Heart right ventricle (tissue), 16 donors: ENCODE measurements at regions of chr9 and their contacts with region 1.

Region 1: GRCh38 chr9:24359046-24359445 is 186.7 kb downstream of the IZUMO3 start:
- DNase-seq: no peak
- ATAC-seq: no peak
- H3K4me3 ChIP-seq: no peak overlapping the region
- H3K27ac ChIP-seq: no peak overlapping the region
- H3K4me1 ChIP-seq: no peaks in the 10 kb centered on the region
- H3K27me3 ChIP-seq: no peaks in the 10 kb centered on the region
- CTCF ChIP-seq: no peak

Region 2: GRCh38 chr9:24308010-24308409 is 51.0 kb before region 1 on chr9:
- intact Hi-C with region 1: loop called in 1 of 10 experiments (anchors 10 kb)
- DNase-seq: no peak
- ATAC-seq: no peak
- H3K4me3 ChIP-seq: no peak overlapping the region
- H3K27ac ChIP-seq: no peak overlapping the region
- H3K4me1 ChIP-seq: no peaks in the 10 kb centered on the region
- H3K27me3 ChIP-seq: no peaks in the 10 kb centered on the region
- CTCF ChIP-seq: no peak

Region 3: DNA sequence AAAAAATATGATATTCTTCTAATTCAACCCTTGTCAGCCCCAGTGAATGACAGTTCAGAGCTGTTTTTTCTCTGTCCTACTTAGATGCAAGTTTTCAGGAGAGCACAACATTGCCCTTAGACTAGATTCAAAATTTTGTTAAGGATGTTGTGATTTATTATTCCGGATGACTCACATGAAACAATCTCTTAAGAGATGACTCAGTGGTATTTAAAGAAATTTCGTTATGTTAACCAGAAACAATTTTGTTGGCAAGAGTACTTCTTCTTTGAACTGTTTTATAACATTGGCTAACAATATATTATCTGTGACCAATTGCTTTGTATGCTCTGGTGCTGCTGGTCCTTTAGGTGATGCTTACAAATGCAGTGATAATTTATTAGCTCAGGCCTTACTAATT is 54.6 kb after region 1 on chr9:
- intact Hi-C with region 1: loop called in 1 of 10 experiments (anchors 5 kb)
- DNase-seq: no peak
- ATAC-seq: no peak
- H3K4me3 ChIP-seq: no peak overlapping the region
- H3K27ac ChIP-seq: no peak overlapping the region
- H3K4me1 ChIP-seq: no peaks in the 10 kb centered on the region
- H3K27me3 ChIP-seq: no peaks in the 10 kb centered on the region
- CTCF ChIP-seq: no peak

Region 4: DNA sequence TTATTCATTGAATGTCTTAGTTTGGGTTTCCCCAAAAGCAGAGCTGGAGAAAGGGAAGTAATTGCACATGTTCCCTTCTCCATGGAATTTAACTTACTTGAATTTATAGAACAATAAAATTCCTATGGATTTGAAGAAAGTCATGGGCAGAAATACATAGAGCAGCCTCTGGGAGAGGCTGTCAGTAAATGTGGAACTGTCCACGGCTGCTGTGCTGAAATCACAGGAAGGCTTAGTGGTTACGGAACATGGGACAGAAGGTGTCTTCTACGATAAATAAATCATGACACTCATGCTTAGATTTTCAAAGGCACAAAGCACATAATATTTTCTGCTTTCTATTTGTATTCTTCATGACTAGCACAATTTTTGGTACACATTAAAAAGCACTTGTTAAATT is 627.3 kb after region 1 on chr9:
- intact Hi-C with region 1: no loop called
- DNase-seq: no peak
- ATAC-seq: no peak
- H3K4me3 ChIP-seq: no peak overlapping the region
- H3K27ac ChIP-seq: no peak overlapping the region
- H3K4me1 ChIP-seq: no peaks in the 10 kb centered on the region
- H3K27me3 ChIP-seq: no peaks in the 10 kb centered on the region
- CTCF ChIP-seq: no peak